Left cardiac atrium (tissue), 4 donors: ENCODE measurements at regions of chr7 and their contacts with region 1.

Region 1: DNA sequence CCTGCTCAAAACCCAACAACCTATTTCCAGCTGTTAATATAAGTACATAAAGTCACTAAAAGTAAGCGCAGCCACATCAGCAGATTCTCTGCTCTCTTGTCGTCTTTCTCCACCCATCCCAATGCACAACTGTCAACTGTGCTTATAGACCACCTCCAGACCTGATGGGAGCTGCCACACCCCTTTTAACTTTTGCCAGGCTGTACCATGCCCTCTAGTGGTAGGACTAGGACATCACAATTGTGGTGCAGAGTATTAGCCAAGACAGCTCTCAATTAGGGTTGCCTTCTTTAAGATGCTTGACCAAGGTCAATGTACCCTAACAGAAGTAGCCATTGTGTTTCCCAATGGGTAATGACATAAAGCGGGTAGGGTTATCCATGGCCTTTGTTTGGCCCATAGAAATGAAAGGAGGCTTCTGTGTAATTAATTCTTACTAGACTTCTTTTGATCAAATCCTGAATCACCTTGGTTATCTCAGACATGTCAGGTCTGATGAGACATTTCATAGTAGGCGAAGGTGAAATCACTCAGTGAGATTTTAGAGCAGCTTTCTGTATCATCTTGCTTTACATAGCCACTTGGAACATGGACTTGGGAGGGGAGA is 68.1 kb downstream of the SCRN1 start:
- DNase-seq: peak; percentile 28
- ATAC-seq: peak; percentile 87

Region 2: DNA sequence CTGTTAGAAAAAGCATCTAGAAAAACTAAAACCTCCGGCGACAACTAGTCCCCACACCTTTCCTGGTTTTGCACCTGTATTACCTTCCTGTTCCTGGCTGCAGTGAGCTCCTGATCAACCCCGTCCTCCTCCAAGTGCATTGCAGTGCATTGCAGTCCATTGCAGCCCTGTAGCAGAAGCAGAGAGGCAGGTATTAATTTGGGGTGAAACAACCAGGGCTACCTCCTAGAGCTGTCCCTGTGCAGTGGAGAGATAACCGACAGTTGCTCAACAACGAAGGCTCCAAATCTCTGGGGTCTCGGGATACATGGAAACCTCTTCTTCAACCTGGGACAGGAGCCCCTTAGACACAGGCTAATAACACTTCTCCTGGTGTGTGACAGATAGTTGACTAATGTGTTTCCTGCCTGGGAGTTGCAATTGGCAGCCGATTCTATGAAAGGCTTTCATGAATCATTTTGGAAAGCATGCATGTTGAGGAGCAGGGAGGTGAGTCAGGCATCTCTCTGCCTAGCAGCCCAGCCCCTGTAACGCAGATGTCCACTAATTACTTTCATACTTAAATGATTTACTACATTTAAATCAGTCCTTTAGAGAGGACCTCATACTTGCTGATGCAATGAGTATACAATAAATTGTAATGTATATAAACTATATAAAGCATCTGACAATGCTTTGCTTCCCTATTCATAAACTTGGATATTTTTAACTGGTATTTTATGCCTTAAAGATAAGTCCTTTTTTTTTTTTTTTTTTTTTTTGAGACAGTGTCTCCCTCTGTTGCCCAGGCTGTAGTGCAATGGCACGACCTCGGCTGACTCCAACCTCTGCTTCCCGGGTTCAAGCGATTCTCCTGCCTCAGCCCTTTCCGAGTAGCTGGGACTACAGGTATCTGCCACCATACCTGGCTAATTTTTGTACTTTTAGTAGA is 298.9 kb before region 1 on chr7:
- intact Hi-C with region 1: loop called in 1 of 2 experiments (anchors 10 kb)
- DNase-seq: peak; percentile 33
- ATAC-seq: peak in 1 of 2 donors; percentile 98

Region 3: GRCh38 chr7:29639881-29640595 is 281.5 kb before region 1 on chr7:
- intact Hi-C with region 1: loop called in 1 of 2 experiments (anchors 5 kb)
- DNase-seq: no peak
- ATAC-seq: no peak